ENCODE measurements at regions of chr2 and their contacts with region 1.

Region 1: GRCh38 chr2:140600116-140600515 is 1530.7 kb downstream of the LRP1B start:
- DNase-seq: no peak
- H3K4me3 ChIP-seq: no peak overlapping the region
- H3K27ac ChIP-seq: no peak overlapping the region
- H3K4me1 ChIP-seq: no peaks in the 10 kb centered on the region
- H3K27me3 ChIP-seq: no peaks in the 10 kb centered on the region
- CTCF ChIP-seq: no peak
- EP300 ChIP-seq: no peak
- POLR2A ChIP-seq: no peak

Region 2: GRCh38 chr2:139574371-139574770 is 1025.7 kb before region 1 on chr2:
- intact Hi-C with region 1: loop called in 1 of 4 experiments (anchors 10 kb)
- DNase-seq: no peak
- H3K4me3 ChIP-seq: no peak overlapping the region
- H3K27ac ChIP-seq: no peak overlapping the region
- H3K4me1 ChIP-seq: no peaks in the 10 kb centered on the region
- H3K27me3 ChIP-seq: no peaks in the 10 kb centered on the region
- CTCF ChIP-seq: no peak
- EP300 ChIP-seq: no peak
- POLR2A ChIP-seq: no peak

Region 3: DNA sequence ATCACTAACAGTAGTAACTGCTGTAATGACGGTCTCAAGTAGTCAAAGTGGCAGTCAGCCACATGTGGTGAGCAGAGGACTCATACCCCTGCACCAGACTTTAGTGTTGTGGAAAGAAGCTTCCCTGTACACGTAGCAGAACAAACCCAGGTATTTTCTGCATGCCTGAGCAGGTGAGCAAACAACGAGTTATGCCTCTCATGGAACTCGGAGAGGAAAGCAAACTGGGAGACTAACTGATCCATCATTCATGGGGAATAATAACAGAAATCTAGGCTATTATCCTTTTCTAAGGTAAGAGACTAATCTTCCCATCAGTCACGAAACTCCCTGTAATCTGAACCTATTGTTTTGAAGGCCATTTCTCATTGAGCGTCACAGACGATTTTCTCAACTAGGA is 324.7 kb before region 1 on chr2:
- intact Hi-C with region 1: no loop called
- DNase-seq: no peak
- H3K4me3 ChIP-seq: no peak overlapping the region
- H3K27ac ChIP-seq: no peak overlapping the region
- H3K4me1 ChIP-seq: no peaks in the 10 kb centered on the region
- H3K27me3 ChIP-seq: no peaks in the 10 kb centered on the region
- CTCF ChIP-seq: no peak
- EP300 ChIP-seq: no peak
- POLR2A ChIP-seq: no peak

Region 4: DNA sequence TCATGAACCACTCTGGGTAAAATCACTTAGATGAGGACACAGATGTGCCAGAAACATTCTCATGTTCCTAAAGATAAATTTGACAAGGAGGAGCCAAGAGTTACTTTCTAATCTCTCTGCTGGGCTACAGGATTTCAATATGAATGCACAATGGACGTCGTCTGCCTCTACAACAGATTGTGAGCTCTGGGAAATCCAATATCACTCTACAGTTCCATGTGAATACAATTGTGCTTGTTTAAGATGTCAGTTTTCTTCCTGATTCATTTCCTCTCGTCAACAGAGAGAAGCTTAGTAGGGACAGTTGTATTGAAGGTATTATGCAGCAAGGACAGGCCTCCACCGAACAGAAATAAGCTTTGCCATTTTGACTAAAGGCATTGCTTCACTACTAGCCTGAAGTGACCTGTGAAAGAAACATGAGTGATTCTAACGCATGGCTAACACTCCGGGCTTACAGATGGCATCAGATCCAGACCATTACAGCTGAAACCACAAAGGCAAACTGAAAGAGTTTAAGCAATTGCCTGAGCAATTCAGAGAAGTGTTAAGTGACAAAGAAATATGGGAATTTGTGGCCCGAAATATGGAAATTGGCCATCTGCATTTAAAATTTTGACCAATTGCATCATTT is 60.8 kb before region 1 on chr2:
- intact Hi-C with region 1: no loop called
- DNase-seq: no peak
- H3K4me3 ChIP-seq: no peak overlapping the region
- H3K27ac ChIP-seq: no peak overlapping the region
- H3K4me1 ChIP-seq: no peaks in the 10 kb centered on the region
- H3K27me3 ChIP-seq: no peaks in the 10 kb centered on the region
- CTCF ChIP-seq: no peak
- EP300 ChIP-seq: no peak
- POLR2A ChIP-seq: no peak

Measured in ovary (tissue), 10 donors.